Dorsolateral prefrontal cortex (tissue), 120 donors: ENCODE measurements at regions of chr10 and their contacts with region 1.

Region 1: GRCh38 chr10:63866075-63866746 is 345.0 kb downstream of the REEP3 start:
- DNase-seq: peak in 8 of 10 donors; percentile 21 to 64 (median 56)
- H3K4me3 ChIP-seq: peak overlapping the region in 57 of 59 donors; percentile 4 to 64 (median 43)
- H3K27ac ChIP-seq: peak overlapping the region in 2 of 59 donors; percentile 22 to 54
- H3K27me3 ChIP-seq: peaks cover 0 to 4% (median 0%) of the 10 kb centered on the region in 45 donors
- CTCF ChIP-seq: peak; percentile 62 to 93 (median 84)

Region 2: GRCh38 chr10:63664341-63665102 is 201.7 kb before region 1 on chr10:
- intact Hi-C with region 1: no loop called
- DNase-seq: no peak
- H3K4me3 ChIP-seq: no peak overlapping the region
- H3K27ac ChIP-seq: no peak overlapping the region
- H3K27me3 ChIP-seq: no peaks in the 10 kb centered on the region
- CTCF ChIP-seq: no peak

Region 3: DNA sequence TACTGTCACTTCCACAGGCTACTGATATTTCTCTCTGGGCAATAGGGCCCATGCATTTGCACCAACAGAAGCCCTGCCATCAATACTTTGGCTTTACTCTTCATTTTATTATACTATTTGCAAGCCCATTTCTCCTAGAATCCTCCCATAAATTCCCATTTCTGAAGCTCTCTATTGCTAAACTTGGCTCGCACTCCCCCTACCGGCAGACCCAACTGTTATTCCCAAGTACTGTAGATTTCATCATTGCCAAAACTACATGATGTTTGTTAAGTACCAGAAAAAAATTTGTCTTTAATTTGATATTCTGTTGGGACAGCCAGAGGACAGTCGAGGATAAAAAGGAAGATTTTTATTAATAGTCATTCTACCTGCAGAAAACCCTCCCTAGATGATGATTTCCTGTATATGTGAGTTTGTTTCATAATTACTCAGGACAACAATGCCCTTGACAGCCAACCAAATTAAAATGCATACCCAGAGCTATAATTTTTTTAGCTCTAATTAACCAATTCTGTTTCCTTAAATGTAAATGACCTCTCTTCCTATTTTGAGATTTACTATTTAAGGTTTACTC is 46.4 kb before region 1 on chr10:
- intact Hi-C with region 1: no loop called
- DNase-seq: peak in 9 of 10 donors; percentile 25 to 71 (median 57)
- H3K4me3 ChIP-seq: no peak overlapping the region
- H3K27ac ChIP-seq: no peak overlapping the region
- H3K27me3 ChIP-seq: no peaks in the 10 kb centered on the region
- CTCF ChIP-seq: peak; percentile 44 to 84 (median 72)

Region 4: DNA sequence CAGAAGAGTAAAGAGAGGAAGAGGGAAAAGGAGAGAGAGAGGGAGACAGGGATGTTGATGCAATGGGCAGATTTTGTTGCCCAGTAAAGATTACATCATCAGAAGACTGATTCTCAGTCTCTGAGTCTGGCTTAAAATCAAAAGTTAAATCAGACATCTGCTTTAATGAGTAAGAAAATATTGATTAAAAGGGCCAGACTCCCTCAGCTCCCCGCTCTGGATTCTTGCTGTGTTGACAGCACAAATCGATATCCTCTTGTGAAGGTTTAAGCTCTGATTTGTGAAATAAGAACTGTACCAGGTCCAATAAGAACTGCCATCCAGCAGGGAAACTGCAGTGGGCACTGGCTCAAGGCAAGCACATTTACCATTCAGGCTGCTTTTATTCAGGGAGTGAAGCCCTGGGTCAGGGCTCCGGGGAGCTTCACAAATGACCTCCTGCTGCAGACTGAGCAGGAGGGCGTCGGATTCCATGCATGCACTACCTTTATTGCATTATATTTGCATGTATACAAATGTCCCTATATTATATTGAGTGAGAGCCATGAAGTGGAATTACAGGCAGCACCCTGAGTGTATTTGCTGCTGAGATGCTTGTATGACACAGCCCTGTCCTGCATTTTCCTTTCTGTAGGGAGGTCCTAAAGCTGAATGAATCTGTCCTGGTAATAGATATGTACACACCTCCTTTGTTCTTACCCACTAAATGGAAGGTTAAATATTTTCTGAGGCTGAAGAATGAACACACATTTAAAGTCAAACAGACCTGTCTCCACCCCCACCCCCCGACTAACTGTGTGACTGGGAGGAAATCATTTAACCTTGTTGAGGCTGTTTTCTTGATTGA is 56.5 kb after region 1 on chr10:
- intact Hi-C with region 1: no loop called
- DNase-seq: peak in 1 of 10 donors; percentile 45
- H3K4me3 ChIP-seq: no peak overlapping the region
- H3K27ac ChIP-seq: peak overlapping the region in 1 of 59 donors; percentile 6
- H3K27me3 ChIP-seq: no peaks in the 10 kb centered on the region
- CTCF ChIP-seq: no peak

Region 5: GRCh38 chr10:63976538-63976937 is 110.3 kb after region 1 on chr10:
- intact Hi-C with region 1: loop called in 1 of 2 experiments (anchors 5 kb)
- DNase-seq: peak in 4 of 10 donors; percentile 14 to 47 (median 30)
- H3K4me3 ChIP-seq: no peak overlapping the region
- H3K27ac ChIP-seq: no peak overlapping the region
- H3K27me3 ChIP-seq: no peaks in the 10 kb centered on the region
- CTCF ChIP-seq: peak in 51 of 56 donors; percentile 24 to 63 (median 51)

Region 6: DNA sequence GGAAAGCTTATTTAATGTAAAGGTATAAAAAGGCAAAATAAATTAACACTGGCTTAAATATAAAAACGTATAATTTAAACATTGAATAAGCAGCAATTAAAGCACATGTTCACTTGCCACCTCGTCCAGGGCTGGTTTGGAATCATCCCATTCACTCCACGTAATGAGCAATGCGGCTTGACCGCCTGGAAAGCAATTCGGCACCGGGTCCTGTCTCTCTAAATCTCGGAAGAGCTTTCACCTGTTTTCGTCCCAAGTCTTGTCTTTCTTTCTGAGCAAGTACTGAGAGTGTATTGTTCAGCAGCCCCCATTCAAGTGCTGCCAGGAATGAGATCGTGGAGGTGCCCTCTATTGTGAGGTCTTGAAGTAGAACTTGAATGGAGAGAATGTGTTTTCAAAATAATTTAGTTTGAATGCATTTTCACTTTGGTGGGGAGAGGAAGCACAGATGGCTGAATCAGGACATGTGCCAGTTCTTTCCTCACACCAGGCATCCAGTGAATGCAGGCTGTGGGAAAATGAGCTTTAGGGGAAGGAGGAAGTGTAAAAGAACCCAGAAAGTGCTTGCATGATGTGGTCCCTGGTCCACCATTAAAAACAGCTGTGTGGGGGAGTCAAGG is 170.2 kb after region 1 on chr10:
- intact Hi-C with region 1: loop called in 1 of 2 experiments (anchors 5 kb)
- DNase-seq: peak in 3 of 10 donors; percentile 31 to 78 (median 40)
- H3K4me3 ChIP-seq: peak overlapping the region in 58 of 59 donors; percentile 9 to 62 (median 40)
- H3K27ac ChIP-seq: peak overlapping the region in 3 of 59 donors; percentile 0 to 39 (median 10)
- H3K27me3 ChIP-seq: no peaks in the 10 kb centered on the region
- CTCF ChIP-seq: no peak